Prostate gland (tissue), 2 donors: ENCODE measurements at regions of chr2 and their contacts with region 1.

Region 1: DNA sequence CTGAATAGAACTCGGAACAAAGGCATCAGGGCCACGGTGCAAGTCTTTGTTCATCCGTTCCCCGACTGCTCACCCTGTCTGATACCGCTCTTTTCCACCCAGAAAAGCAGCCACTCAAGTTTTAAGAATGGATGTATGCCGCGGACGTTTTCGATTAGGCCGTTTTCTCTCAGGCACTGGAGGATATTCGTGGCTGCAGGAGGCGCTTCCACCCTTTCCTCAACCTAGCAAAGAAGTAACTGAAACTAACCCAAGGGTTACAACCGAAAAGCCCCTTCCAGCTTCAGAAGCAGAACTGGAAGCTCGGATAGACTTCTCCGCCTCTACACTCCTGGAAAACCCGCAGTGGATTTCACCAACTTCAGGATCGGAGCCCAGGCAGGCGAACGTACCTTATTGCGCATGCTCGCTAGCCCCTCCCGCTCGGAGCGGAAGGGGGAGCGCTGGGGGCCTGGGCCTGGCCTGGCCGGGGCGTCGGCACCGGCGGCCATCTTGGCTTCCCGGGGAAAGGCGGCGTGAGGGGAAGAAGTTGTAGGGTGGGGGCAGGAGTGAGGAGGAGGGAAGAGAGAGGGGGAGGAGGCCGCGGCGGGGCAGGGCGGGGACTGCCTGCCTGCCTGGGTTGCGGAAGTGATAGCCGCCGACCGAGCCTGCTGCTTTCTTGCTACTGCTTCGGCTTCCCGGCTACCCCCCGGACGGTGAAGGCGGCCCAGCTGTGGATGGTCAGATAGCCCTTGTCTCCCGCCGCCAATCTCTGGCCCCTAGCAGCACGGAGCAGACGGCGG is at the start of gene ACTR3:
- DNase-seq: peak; percentile 98
- H3K4me3 ChIP-seq: peak within 1 kb of the TSS; percentile 81 to 99
- H3K27ac ChIP-seq: peak within 1 kb of the TSS; percentile 96 to 98
- H3K4me1 ChIP-seq: peaks cover 6% of the 10 kb centered on the region
- H3K27me3 ChIP-seq: no peaks in the 10 kb centered on the region
- CTCF ChIP-seq: peak in 2 of 4 experiments; percentile 7 to 32
- POLR2A ChIP-seq: peak; percentile 87
- total RNA-seq, gene ACTR3: 65.9 to 93.7 TPM

Region 2: GRCh38 chr2:113756355-113757137 is 133.1 kb before region 1 on chr2 and contains the start of gene SLC35F5:
- intact Hi-C with region 1: loop called (anchors 2 kb)
- DNase-seq: peak; percentile 91
- H3K4me3 ChIP-seq: peak within 1 kb of the TSS; percentile 86 to 87
- H3K27ac ChIP-seq: peak within 1 kb of the TSS; percentile 94 to 97
- H3K4me1 ChIP-seq: peaks cover 3% of the 10 kb centered on the region
- H3K27me3 ChIP-seq: no peaks in the 10 kb centered on the region
- CTCF ChIP-seq: no peak
- POLR2A ChIP-seq: peak; percentile 87
- total RNA-seq, gene SLC35F5: 69.7 to 88.6 TPM